ENCODE measurements at regions of chr12 and their contacts with region 1.

Region 1: GRCh38 chr12:113174461-113175384 is 10.6 kb downstream of the DDX54 start:
- DNase-seq: no peak
- ATAC-seq: peak; percentile 91
- H3K4me3 ChIP-seq: no peak overlapping the region
- H3K27ac ChIP-seq: no peak overlapping the region
- H3K4me1 ChIP-seq: peaks cover 19% of the 10 kb centered on the region
- H3K27me3 ChIP-seq: no peaks in the 10 kb centered on the region
- CTCF ChIP-seq: peak; percentile 87 to 99 (median 98)
- EP300 ChIP-seq: no peak
- POLR2A ChIP-seq: peak; percentile 50
- RAD21 ChIP-seq: peak; percentile 90

Region 2: DNA sequence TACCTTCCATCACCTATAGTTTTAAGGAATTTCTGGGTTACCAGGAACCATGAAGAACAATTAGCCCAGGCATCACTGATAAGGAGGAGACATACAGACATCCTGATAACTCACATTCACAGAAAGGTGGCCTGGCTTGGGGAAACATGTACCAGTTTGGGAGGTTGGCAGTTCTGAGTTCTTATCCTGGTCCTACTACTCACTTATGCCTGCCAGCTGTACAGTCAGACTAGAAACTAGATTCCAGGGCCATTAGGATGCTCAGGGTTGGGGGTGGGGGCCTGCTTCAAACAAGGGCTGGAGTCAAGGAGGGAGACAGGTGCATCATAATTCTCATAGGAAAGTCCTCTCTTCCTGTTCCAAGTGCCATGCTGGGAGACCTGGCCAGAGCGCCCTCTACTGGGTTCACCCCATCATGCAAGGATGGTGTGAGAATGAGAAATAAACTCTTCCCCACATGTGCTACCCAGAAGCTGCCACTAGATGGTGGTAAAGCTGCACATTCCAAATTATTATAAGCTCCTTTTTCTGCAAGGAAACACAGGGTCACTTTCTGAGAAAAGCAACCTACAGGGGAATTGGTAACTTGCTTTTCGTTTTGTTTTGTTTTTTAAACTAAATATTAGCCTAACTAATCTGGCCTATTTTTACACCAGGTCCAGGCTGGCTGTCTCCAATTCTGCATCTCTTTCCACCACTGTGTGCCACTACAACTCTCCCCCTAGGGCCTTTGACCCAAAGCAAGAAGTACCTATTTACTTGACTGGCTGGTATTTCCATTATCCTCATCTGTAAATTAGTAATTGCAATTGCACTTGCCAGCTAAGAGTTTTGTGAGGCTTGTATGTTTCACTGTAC is 182.0 kb before region 1 on chr12:
- CTCF ChIA-PET with region 1: interaction called, 25 read pairs
- POLR2A ChIA-PET with region 1: interaction called, 4 read pairs
- RAD21 ChIA-PET with region 1: interaction called, 11 read pairs
- SMC1A ChIA-PET with region 1: interaction called, 6 read pairs
- in situ Hi-C with region 1: no loop called
- intact Hi-C with region 1: loop called (anchors 5 kb)
- DNase-seq: no peak
- ATAC-seq: peak; percentile 74
- H3K4me3 ChIP-seq: no peak overlapping the region
- H3K27ac ChIP-seq: no peak overlapping the region
- H3K4me1 ChIP-seq: no peaks in the 10 kb centered on the region
- H3K27me3 ChIP-seq: no peaks in the 10 kb centered on the region
- CTCF ChIP-seq: peak; percentile 81 to 99 (median 83); a peak in 5 of 6 replicates
- EP300 ChIP-seq: no peak
- POLR2A ChIP-seq: no peak
- RAD21 ChIP-seq: peak; percentile 81

Region 3: GRCh38 chr12:113092607-113093408 is 81.9 kb before region 1 on chr12:
- CTCF ChIA-PET with region 1: interaction called, 92 read pairs
- POLR2A ChIA-PET with region 1: no interaction called
- RAD21 ChIA-PET with region 1: interaction called, 19 read pairs
- SMC1A ChIA-PET with region 1: interaction called, 20 read pairs
- in situ Hi-C with region 1: no loop called
- intact Hi-C with region 1: loop called (anchors 2 kb)
- DNase-seq: no peak
- ATAC-seq: peak; percentile 50
- H3K4me3 ChIP-seq: no peak overlapping the region
- H3K27ac ChIP-seq: no peak overlapping the region
- H3K4me1 ChIP-seq: peaks cover 31% of the 10 kb centered on the region
- H3K27me3 ChIP-seq: no peaks in the 10 kb centered on the region
- CTCF ChIP-seq: peak; percentile 48 to 54 (median 53); a peak in 5 of 6 replicates
- EP300 ChIP-seq: no peak
- POLR2A ChIP-seq: no peak
- RAD21 ChIP-seq: peak; percentile 69

Region 4: DNA sequence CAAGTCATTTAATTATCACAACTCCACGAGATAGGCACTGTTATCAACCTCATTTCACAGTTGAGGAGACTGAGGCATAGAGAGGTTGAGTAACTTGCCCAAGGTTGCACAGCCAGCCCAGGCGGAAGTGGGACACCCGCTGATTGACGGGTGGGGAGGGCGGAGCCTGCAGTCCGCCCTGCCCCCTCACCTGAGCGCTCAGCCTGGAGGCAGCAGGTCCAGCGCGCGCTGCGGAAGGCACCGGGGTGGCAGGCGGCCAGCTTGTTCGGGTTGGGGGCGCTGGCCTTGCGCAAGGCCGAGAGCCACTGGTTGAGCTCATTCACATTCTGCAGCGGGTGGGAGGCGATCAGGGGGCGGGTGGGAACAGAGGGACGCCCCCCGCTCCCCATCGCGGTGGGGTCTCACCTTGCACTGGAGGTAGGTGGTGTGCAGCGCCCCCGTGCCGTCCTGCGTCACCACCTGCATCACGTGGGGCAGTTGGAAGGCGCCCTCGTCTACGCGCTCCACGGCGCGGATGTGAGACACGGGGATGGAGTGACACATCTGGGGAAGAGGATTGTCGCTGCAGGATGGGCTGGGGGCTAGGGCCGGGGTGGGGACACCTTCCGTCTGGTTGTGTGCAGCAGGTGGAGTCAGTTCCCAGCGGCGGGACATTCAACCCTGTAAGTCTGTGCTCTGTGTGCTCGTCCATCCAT is 70.8 kb before region 1 on chr12:
- CTCF ChIA-PET with region 1: interaction called, 92 read pairs
- POLR2A ChIA-PET with region 1: interaction called, 3 read pairs
- RAD21 ChIA-PET with region 1: interaction called, 16 read pairs
- SMC1A ChIA-PET with region 1: interaction called, 20 read pairs
- in situ Hi-C with region 1: no loop called
- intact Hi-C with region 1: loop called (anchors 2 kb)
- DNase-seq: no peak
- ATAC-seq: peak; percentile 39; the same call in 2 of the 3 replicates
- H3K4me3 ChIP-seq: peak overlapping the region; percentile 5; the same call in 1 of the 2 replicates
- H3K27ac ChIP-seq: no peak overlapping the region
- H3K4me1 ChIP-seq: peaks cover 10% of the 10 kb centered on the region; the same call in 1 of the 2 replicates
- H3K27me3 ChIP-seq: no peaks in the 10 kb centered on the region
- CTCF ChIP-seq: no peak
- EP300 ChIP-seq: no peak
- POLR2A ChIP-seq: no peak
- RAD21 ChIP-seq: no peak

Region 5: GRCh38 chr12:113142173-113142885 is 32.4 kb before region 1 on chr12:
- CTCF ChIA-PET with region 1: interaction called, 10 read pairs
- POLR2A ChIA-PET with region 1: interaction called, 3 read pairs
- RAD21 ChIA-PET with region 1: interaction called, 4 read pairs
- SMC1A ChIA-PET with region 1: no interaction called
- in situ Hi-C with region 1: no loop called
- intact Hi-C with region 1: no loop called
- DNase-seq: no peak
- ATAC-seq: peak; percentile 50
- H3K4me3 ChIP-seq: no peak overlapping the region
- H3K27ac ChIP-seq: peak overlapping the region; percentile 7; the same call in 1 of the 2 replicates
- H3K4me1 ChIP-seq: no peaks in the 10 kb centered on the region; the same call in 1 of the 2 replicates
- H3K27me3 ChIP-seq: no peaks in the 10 kb centered on the region
- CTCF ChIP-seq: no peak
- EP300 ChIP-seq: no peak
- POLR2A ChIP-seq: no peak
- RAD21 ChIP-seq: no peak

Region 6: DNA sequence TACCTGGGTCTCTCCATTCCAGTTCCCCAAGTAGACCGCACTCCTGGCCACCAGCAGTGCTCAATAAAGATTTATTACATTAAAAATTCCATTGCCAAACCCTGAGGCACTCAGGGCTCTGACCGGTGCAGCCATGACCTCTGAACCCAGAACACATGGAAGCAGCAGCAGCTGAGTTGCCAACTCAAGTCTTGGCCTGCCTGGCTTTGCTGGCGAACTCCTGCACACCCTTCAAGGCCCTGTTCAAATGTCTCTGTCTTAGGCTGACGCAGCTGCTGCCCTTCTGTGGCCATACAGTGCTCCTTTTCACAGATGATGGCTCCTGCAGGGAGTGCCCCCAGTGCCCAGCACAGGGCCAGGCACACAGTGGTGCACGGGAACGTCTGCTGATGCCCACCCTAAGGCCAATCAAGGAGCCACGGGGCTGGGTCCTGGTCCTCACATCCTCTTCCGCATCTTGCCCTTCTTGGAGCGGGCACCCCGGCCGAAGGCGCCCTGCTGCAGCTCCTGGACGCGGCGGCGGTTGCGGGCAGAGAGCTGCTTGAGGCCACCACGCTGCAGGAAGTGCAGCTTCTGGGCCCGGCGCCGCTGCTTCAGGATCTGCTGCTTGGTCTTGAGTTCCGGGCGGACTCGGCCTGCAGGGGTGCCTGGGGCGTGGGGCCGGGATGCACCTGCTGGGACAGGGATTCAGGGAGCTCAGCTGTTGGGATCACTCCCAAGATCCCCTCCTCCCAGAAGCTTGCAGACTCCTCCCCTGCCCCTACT is 16.1 kb before region 1 on chr12:
- CTCF ChIA-PET with region 1: interaction called, 31 read pairs
- POLR2A ChIA-PET with region 1: no interaction called
- RAD21 ChIA-PET with region 1: interaction called, 29 read pairs
- SMC1A ChIA-PET with region 1: interaction called, 37 read pairs
- in situ Hi-C with region 1: no loop called
- intact Hi-C with region 1: no loop called
- DNase-seq: no peak
- ATAC-seq: no peak
- H3K4me3 ChIP-seq: no peak overlapping the region
- H3K27ac ChIP-seq: no peak overlapping the region
- H3K4me1 ChIP-seq: peaks cover 10% of the 10 kb centered on the region; the same call in 1 of the 2 replicates
- H3K27me3 ChIP-seq: 0 out of 4 replicates have a peak, but pooled peaks cover 0 to 4% of the 10 kb centered on the region in 2 experiments
- CTCF ChIP-seq: no peak
- EP300 ChIP-seq: no peak
- POLR2A ChIP-seq: no peak; the same call in 1 of the 2 replicates
- RAD21 ChIP-seq: no peak

Region 7: GRCh38 chr12:113232840-113233585 is 58.3 kb after region 1 on chr12:
- CTCF ChIA-PET with region 1: interaction called, 14 read pairs
- POLR2A ChIA-PET with region 1: interaction called, 3 read pairs
- RAD21 ChIA-PET with region 1: no interaction called
- SMC1A ChIA-PET with region 1: interaction called, 3 read pairs
- in situ Hi-C with region 1: no loop called
- intact Hi-C with region 1: no loop called
- DNase-seq: peak; percentile 69
- ATAC-seq: peak; percentile 78
- H3K4me3 ChIP-seq: no peak overlapping the region; the same call in 1 of the 2 replicates
- H3K27ac ChIP-seq: peak overlapping the region; percentile 86
- H3K4me1 ChIP-seq: peaks cover 57% of the 10 kb centered on the region
- H3K27me3 ChIP-seq: no peaks in the 10 kb centered on the region
- CTCF ChIP-seq: peak; percentile 34 to 53 (median 51); a peak in 4 of 6 replicates
- EP300 ChIP-seq: no peak
- POLR2A ChIP-seq: peak; percentile 72
- RAD21 ChIP-seq: peak; percentile 48